ENCODE measurements at regions of chr2 and their contacts with region 1.

Region 1: GRCh38 chr2:198337368-198337767 is 533.0 kb downstream of the PLCL1 start:
- DNase-seq: no peak
- H3K4me3 ChIP-seq: no peak overlapping the region
- CTCF ChIP-seq: no peak

Region 2: GRCh38 chr2:198273660-198274059 is 63.7 kb before region 1 on chr2:
- in situ Hi-C with region 1: no loop called
- DNase-seq: peak; percentile 6
- H3K4me3 ChIP-seq: no peak overlapping the region
- CTCF ChIP-seq: no peak

Region 3: GRCh38 chr2:198304859-198305258 is 32.5 kb before region 1 on chr2:
- in situ Hi-C with region 1: no loop called
- DNase-seq: no peak
- H3K4me3 ChIP-seq: no peak overlapping the region
- CTCF ChIP-seq: no peak

Region 4: DNA sequence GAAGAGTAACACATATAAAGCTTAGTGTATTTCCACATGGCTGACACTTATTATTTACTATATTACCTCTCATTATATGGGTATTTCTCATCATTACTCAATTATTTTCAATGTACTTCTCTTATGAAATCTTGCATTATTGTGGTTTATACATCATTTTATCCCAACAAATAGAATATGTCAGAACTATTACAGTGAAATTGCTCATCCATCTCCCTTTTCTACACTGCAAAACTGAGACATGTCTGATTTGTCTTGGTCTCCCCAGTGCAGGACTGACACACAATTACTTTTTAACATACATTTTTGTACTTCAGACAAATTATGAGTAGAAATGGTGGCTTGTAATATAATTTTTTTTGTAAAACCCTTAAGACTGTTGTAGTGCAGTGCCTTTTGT is 67.9 kb after region 1 on chr2:
- in situ Hi-C with region 1: no loop called
- DNase-seq: no peak
- H3K4me3 ChIP-seq: no peak overlapping the region
- CTCF ChIP-seq: no peak

Region 5: DNA sequence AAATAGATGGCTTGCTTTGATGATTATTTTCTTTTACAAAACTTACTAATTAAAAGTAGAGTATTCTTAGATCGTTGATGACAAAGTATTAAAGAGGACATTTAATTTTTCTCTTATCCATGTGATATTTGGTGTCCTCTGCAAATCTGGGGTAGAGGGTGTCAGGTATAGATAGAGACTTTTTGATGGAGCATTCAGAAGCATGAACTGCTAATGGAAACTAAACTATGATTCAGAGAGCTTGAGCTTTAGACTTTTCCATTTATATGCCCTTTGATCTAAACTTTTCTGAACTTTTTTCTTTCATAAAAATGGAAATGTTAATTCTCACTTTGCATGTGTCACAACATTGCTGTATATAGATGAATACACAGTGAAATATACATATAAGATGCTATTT is 86.7 kb after region 1 on chr2:
- in situ Hi-C with region 1: loop called (anchors 5 kb)
- DNase-seq: no peak
- H3K4me3 ChIP-seq: no peak overlapping the region
- CTCF ChIP-seq: no peak